Activated CD4-positive, alpha-beta T cell treated with anti-CD3 and anti-CD28 coated beads, Interleukin-2, amount 10 ng/mL, durations not matched to agents 7 days and 5 days (primary cell): ENCODE measurements at regions of chr3 and their contacts with region 1.

Region 1: GRCh38 chr3:187319699-187320302 is 28.3 kb upstream of the MASP1 start:
- DNase-seq: peak; percentile 68
- H3K4me3 Mint-ChIP-seq: no peak overlapping the region
- H3K27ac Mint-ChIP-seq: no peak overlapping the region
- H3K4me1 Mint-ChIP-seq: peaks cover 11% of the 10 kb centered on the region
- H3K27me3 Mint-ChIP-seq: peaks cover 28% of the 10 kb centered on the region

Region 2: DNA sequence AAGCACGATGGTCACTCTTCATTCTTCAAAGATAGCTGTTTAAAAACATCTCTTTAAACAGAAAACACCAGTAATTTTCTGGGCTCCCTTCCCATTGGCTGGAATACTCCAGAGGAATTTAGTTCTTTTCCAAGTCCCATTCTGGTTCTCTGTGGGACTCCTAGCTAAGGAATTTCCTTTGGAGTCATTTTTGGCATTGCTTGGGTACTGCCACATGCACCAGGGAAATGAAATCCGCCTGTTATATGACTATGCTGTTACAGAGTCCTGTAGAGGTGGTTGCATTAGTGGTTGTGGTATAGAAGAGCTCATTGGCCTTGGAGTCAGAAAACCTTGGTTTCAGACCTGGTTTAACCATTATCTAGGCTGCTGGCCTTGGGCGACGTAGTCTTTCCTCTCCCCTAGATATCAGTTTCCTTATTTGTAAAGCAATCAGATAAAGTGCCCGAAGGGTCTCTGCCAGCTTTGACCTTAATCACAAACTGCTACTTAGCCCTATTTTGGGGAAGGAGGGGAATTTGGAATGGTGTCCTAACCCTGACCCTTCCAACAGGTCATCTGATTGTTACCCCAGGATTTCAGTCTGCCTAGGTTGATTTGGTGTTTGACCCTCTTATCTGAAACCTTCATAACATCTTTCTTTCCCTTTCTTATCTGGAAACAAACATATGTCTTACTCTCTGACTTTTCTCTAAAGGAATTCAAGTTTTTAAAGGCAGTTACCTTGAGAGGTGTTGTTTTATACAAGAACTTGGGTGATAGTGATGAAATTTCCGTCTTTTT is 109.1 kb before region 1 on chr3:
- CTCF ChIA-PET with region 1: no interaction called
- POLR2A ChIA-PET with region 1: no interaction called
- DNase-seq: no peak
- H3K4me3 Mint-ChIP-seq: no peak overlapping the region
- H3K27ac Mint-ChIP-seq: no peak overlapping the region
- H3K4me1 Mint-ChIP-seq: no peaks in the 10 kb centered on the region
- H3K27me3 Mint-ChIP-seq: peaks cover 11% of the 10 kb centered on the region

Region 3: GRCh38 chr3:187669675-187670504 is 350.1 kb after region 1 on chr3 and contains the start of gene SST:
- CTCF ChIA-PET with region 1: interaction called, 107 read pairs
- POLR2A ChIA-PET with region 1: no interaction called
- DNase-seq: peak; percentile 41
- H3K4me3 Mint-ChIP-seq: no peak within 1 kb of the TSS
- H3K27ac Mint-ChIP-seq: peak within 1 kb of the TSS; percentile 19
- H3K4me1 Mint-ChIP-seq: no peaks in the 10 kb centered on the region
- H3K27me3 Mint-ChIP-seq: peaks cover 60% of the 10 kb centered on the region
- total RNA-seq, gene SST: not detected

Region 4: GRCh38 chr3:187679638-187680396 is 360.0 kb after region 1 on chr3:
- CTCF ChIA-PET with region 1: interaction called, 107 read pairs
- POLR2A ChIA-PET with region 1: no interaction called
- DNase-seq: peak; percentile 65
- H3K4me3 Mint-ChIP-seq: no peak overlapping the region
- H3K27ac Mint-ChIP-seq: no peak overlapping the region
- H3K4me1 Mint-ChIP-seq: no peaks in the 10 kb centered on the region
- H3K27me3 Mint-ChIP-seq: peaks cover 39% of the 10 kb centered on the region